ENCODE measurements at regions of chr4 and their contacts with region 1.

Region 1: DNA sequence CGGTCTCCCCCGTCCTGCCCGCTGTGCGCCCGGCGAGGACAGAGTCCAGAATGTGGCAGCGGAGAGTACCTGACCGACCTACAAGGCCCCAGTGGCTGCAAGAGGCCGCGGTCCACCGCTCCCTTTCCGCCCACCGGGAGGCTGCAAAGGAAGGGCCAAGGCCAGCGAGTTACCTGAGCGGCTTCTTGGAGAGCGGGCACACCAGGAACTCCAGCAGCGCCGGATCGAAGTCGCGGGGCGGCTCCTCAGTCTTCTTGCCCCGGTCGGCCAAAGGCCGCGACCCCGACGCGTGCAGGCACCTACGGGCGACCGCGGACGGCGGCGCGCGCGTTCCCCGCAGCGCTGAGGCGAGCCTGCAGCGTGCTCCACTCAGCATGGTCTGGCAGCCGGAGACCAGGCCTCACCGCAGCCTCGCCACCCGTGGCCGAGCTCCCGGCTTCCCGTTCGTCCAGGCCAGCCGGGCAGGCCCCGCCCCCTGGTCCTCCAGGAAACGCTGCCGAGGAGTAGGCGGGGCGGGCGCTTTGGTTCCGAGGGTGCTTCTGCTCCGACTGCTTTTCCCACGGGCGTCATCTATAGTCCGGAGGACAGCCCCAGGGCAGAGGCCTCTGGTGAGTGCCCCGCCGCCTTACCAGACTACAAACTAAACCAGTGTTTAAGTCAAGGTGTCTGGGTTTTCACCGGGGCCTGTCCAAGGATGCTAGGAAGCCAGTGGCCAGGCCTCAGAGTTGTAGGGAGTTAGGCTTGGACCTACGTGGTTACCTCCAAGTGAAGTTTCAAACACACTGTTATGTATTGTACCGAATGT is at the start of gene PYURF:
- DNase-seq: peak; percentile 92
- total RNA-seq, gene PYURF: 142 and 153 TPM in 2 replicates

Region 2: DNA sequence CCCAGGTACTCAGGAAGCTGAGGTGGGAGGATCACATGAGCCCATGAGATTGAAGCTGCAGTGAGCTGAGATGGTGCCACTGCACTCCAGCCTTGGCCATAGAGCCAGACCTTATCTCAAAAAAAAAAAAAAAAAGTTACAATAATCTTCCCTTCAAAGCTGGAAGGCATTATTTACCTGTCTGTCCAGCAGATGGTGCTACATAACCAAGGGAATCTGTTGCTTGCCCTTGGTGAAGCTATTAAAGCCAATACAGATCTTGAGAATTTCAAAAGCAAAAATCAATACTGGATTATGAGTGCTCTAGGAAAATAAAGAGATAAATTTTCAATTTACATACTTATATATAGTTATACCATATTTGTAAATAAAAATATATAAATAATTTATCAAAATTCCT is 490.2 kb before region 1 on chr4:
- in situ Hi-C with region 1: loop called (anchors 25 kb)
- DNase-seq: peak; percentile 82

Region 3: GRCh38 chr4:88244816-88245579 is 278.5 kb before region 1 on chr4:
- in situ Hi-C with region 1: loop called (anchors 25 kb)
- DNase-seq: no peak

Region 4: DNA sequence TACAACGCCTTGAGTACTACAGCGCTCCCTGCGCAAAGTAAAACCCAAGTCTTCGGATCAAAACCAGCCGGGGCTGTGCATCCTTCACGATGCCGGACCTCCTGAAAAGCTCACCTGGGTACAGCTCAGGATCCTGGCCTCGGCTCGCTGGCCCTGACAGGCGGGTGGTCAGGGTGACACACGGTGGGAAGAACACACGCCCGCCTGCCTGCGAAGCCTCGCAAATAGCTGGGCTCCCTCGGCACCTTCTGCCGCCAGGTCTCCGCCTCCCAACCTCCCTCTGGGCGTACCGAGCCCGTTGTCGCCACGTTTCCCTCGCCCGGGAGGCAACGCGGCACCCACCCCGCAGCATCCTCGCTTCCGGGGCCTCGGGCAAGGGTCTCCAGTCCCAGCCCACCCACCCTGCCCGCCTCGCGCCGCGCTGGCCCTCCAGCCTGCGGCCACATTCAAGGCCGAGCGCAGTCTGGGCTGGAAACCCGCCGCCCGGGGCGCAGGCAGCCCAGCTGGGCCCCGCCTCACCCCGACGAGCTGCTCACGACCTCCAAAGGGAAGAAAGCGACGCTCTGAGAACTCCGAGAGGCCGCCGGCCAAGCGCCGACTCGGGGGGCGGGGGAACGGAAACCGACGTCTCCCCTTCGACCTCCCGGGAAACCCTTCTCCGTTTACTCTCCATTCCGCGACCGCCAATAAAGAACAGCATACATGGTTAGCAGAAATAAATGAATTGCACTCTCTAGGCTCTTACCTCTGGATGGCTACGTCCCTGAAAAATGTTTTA is 239.7 kb before region 1 on chr4:
- in situ Hi-C with region 1: no loop called
- DNase-seq: peak; percentile 48